ENCODE measurements at regions of chr14 and their contacts with region 1.

Region 1: DNA sequence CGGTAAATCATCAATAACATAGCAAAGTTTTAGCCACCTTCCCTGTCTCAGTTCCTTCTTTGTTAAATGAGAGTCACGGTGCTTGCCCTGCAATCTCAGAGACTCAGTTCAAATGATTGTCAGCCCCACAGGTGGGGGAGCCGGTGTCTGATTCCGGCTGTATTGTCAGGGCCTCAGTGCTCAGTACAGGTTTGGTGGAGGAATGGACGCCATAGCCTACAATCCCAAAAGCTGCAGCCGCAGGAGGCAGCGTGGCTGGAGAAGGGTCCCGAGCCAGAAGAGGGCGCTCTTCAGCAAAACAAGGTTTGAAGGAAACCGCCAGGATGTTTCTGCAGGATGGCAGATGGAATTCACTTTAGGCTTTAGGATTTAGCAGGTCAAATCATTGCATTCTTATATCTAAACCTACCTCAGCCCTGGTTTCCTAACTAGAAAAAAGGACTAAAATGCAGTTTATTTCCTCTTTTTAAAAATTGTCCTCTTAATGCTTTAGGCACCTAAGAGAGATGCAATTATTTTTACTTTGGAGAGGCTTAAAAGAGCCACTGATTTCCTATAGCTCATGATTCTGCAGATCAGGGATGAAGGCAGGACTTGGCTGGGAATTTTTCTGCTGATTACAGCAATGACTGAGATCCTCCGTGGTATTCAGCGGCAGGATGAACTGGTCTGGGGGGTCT is 29.2 kb downstream of the FOS start:
- DNase-seq: peak; percentile 88
- H3K4me3 Mint-ChIP-seq: no peak overlapping the region
- H3K27ac Mint-ChIP-seq: no peak overlapping the region
- H3K4me1 Mint-ChIP-seq: peaks cover 11% of the 10 kb centered on the region
- H3K27me3 Mint-ChIP-seq: no peaks in the 10 kb centered on the region

Region 2: DNA sequence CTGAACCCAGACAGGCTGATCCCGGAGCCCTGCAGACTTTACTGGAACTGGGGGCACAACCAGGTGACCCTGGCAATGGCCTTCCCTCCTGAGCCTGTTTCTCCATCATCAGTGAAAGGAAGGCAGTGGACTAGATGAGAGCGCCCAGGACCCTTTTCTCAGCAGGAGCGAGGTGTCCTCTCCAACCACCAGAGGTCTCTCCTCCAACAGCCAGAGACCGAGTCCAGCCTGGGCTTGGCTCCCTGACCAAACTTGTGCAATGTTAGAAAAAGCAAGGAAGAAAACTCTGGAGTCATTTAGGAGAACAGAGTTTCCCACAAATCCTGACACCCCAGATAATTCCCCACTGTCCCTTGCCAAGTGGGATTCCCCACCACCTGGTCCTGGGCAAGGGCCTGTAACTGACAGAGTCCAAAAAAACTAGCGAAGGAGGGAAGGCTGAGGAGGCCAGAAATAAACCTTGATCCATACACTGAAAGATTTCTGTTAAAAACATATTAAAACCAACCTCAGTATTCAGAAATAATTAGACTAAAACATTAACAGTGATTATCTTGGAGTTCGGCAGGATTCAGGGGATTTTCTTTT is 393.8 kb before region 1 on chr14:
- CTCF ChIA-PET with region 1: no interaction called
- intact Hi-C with region 1: loop called (anchors 2 kb)
- DNase-seq: peak; percentile 38
- H3K4me3 Mint-ChIP-seq: no peak overlapping the region
- H3K27ac Mint-ChIP-seq: no peak overlapping the region
- H3K4me1 Mint-ChIP-seq: no peaks in the 10 kb centered on the region
- H3K27me3 Mint-ChIP-seq: no peaks in the 10 kb centered on the region

Region 3: GRCh38 chr14:75132382-75133086 is 175.3 kb before region 1 on chr14:
- CTCF ChIA-PET with region 1: interaction called, 64 read pairs
- intact Hi-C with region 1: loop called (anchors 1 kb)
- DNase-seq: peak; percentile 64
- H3K4me3 Mint-ChIP-seq: no peak overlapping the region
- H3K27ac Mint-ChIP-seq: peak overlapping the region; percentile 24
- H3K4me1 Mint-ChIP-seq: peaks cover 19% of the 10 kb centered on the region
- H3K27me3 Mint-ChIP-seq: no peaks in the 10 kb centered on the region

Region 4: DNA sequence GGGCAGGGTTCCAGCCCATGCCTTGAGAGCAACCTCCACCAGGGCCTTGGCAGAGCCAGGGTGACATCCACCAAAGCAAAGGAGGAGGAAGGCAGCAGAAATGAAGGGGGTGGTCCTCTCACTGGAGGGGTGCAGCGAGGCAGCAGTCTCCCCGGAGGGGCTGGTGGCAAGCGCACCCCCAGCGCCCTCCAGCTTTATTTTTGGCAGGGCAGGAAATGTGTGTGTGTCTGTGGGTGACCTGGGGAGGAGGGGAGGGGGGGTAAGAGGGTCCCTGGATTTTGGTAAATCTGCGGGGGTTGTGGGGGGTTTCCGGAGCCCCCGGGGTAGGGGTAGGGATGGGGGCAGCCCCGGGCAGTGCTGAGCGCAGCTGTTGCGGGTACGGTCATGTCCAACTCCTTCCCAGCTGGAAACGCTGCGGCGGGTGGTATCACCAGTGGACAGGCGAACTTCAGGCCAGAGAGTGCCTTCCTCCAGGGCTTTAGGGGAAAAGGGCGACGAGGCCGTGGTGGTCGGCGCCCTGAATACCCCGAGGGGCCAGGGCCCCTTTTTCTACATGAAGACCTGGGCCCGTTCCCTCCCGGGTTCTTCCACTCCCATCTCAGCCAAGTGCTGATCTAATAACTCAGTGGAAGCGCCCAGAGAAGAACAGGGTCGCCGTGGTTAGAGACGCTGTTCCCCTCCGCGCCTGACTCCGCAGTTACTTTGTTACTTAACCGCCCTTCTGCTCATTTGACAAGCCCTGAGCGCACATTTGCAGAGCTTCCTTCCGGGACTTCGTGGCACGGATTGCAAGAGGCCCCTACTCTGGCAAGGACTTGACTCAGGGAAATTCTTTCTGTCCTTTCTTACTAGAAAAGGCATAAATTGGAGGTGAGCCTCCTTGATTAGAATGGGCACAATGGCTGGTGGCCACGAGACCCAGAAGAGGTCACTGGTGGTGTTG is 26.0 kb after region 1 on chr14:
- CTCF ChIA-PET with region 1: interaction called, 6 read pairs
- intact Hi-C with region 1: loop called (anchors 2 kb)
- DNase-seq: peak; percentile 74
- H3K4me3 Mint-ChIP-seq: peak overlapping the region; percentile 58
- H3K27ac Mint-ChIP-seq: peak overlapping the region; percentile 80
- H3K4me1 Mint-ChIP-seq: peaks cover 26% of the 10 kb centered on the region
- H3K27me3 Mint-ChIP-seq: no peaks in the 10 kb centered on the region

Region 5: DNA sequence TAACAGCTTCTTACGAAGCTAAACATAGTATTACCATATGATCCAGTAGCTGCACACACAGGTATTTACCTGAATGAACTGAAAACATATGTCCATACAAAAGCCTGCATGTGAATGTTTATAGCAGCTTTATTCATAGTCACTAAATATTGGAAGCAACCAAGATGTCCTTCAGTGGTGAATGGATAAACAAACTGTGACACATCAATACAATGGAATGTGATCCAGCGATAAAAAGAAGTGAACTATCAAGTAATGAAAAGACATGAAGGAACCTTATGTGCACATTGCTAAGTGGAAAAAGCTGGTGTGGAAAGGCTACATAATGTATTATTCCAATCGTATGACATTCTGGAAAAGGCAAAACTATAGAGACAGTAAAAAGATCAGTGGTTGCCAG is 81.8 kb after region 1 on chr14:
- CTCF ChIA-PET with region 1: no interaction called
- intact Hi-C with region 1: no loop called
- DNase-seq: no peak
- H3K4me3 Mint-ChIP-seq: no peak overlapping the region
- H3K27ac Mint-ChIP-seq: no peak overlapping the region
- H3K4me1 Mint-ChIP-seq: no peaks in the 10 kb centered on the region
- H3K27me3 Mint-ChIP-seq: peaks cover 2% of the 10 kb centered on the region

Region 6: GRCh38 chr14:75427482-75428229 is 119.8 kb after region 1 on chr14 and contains the start of gene JDP2:
- CTCF ChIA-PET with region 1: no interaction called
- intact Hi-C with region 1: no loop called
- DNase-seq: peak; percentile 53
- H3K4me3 Mint-ChIP-seq: peak within 1 kb of the TSS; percentile 73
- H3K27ac Mint-ChIP-seq: no peak within 1 kb of the TSS
- H3K4me1 Mint-ChIP-seq: peaks cover 17% of the 10 kb centered on the region
- H3K27me3 Mint-ChIP-seq: peaks cover 15% of the 10 kb centered on the region
- total RNA-seq, gene JDP2: 2.8 to 3.2 TPM

Region 7: DNA sequence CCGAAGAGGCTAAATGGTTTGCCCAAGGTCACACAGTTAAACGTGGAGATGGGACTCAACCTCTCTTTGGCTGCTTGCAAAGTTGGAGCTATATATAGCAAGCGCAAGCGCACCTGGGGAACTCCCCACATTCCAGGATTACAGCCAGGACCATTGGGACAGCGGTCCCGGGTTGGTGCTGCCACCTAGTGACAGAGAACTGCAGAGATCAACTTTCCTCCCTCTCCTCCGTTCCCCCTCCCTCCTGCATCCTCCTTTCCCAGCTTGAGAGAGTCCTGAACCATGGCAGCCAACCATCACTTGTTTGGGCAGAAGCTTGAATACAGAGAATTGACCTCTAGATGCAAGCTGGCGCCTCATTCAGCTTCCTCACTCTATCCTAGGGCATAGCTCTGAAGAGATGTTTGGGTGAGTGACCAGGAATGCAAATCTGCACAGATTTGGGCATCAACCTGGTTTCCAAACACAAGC is 253.2 kb after region 1 on chr14:
- CTCF ChIA-PET with region 1: interaction called, 22 read pairs
- intact Hi-C with region 1: loop called (anchors 1 kb)
- DNase-seq: peak; percentile 72
- H3K4me3 Mint-ChIP-seq: no peak overlapping the region
- H3K27ac Mint-ChIP-seq: peak overlapping the region; percentile 53
- H3K4me1 Mint-ChIP-seq: peaks cover 67% of the 10 kb centered on the region
- H3K27me3 Mint-ChIP-seq: no peaks in the 10 kb centered on the region

Region 8: GRCh38 chr14:75982266-75983018 is 674.6 kb after region 1 on chr14:
- CTCF ChIA-PET with region 1: no interaction called
- intact Hi-C with region 1: loop called (anchors 10 kb)
- DNase-seq: peak; percentile 81
- H3K4me3 Mint-ChIP-seq: peak overlapping the region; percentile 77
- H3K27ac Mint-ChIP-seq: no peak overlapping the region
- H3K4me1 Mint-ChIP-seq: peaks cover 43% of the 10 kb centered on the region
- H3K27me3 Mint-ChIP-seq: no peaks in the 10 kb centered on the region

Measured in activated naive CD4-positive, alpha-beta T cell treated with anti-CD3 and anti-CD28 coated beads for 36 hours (primary cell).